Heart left ventricle (tissue), 16 donors: ENCODE measurements at regions of chr2 and their contacts with region 1.

Region 1: GRCh38 chr2:54228945-54229344 is 27.1 kb downstream of the TSPYL6 start:
- DNase-seq: peak in 1 of 5 donors; percentile 37
- ATAC-seq: no peak
- H3K4me3 ChIP-seq: no peak overlapping the region
- H3K27ac ChIP-seq: no peak overlapping the region
- H3K4me1 ChIP-seq: peaks cover 0 to 50% (median 24%) of the 10 kb centered on the region in 12 donors
- H3K27me3 ChIP-seq: no peaks in the 10 kb centered on the region
- CTCF ChIP-seq: no peak
- POLR2A ChIP-seq: no peak

Region 2: GRCh38 chr2:54310311-54310710 is 81.4 kb after region 1 on chr2:
- intact Hi-C with region 1: loop called in 1 of 10 experiments (anchors 10 kb)
- DNase-seq: no peak
- ATAC-seq: peak in 3 of 4 donors; percentile 39 to 68 (median 67)
- H3K4me3 ChIP-seq: no peak overlapping the region
- H3K27ac ChIP-seq: no peak overlapping the region
- H3K4me1 ChIP-seq: peaks cover 0 to 5% (median 0%) of the 10 kb centered on the region in 12 donors
- H3K27me3 ChIP-seq: no peaks in the 10 kb centered on the region
- CTCF ChIP-seq: no peak
- POLR2A ChIP-seq: no peak